BJ (cell line): ENCODE measurements at regions of chr9 and their contacts with region 1.

Region 1: DNA sequence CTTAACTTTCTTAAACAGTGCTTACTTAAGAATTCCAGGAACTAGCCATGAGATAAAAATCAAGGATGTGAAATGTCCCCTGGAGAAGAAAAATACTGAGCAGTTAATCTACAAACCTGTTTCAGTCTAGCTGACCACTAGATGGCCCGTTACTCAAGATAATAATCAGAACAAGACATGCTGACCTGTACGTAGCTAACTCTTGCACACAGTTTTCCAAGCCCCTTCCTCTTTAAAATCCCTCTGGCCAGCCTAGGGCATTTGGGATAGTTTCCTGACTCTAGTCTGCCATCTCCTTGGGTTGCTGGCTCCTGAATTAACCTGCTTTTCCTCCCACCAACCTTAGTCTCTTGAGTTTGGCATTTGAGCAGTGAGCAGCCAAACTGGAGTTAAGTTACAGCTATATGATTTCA is 59.2 kb upstream of the TRAF1 start:
- DNase-seq: no peak
- H3K4me3 ChIP-seq: no peak overlapping the region
- H3K27me3 ChIP-seq: no peaks in the 10 kb centered on the region
- CTCF ChIP-seq: peak; percentile 72

Region 2: GRCh38 chr9:120490888-120491595 is 494.8 kb before region 1 on chr9:
- CTCF ChIA-PET with region 1: no interaction called
- POLR2A ChIA-PET with region 1: no interaction called
- DNase-seq: no peak
- H3K4me3 ChIP-seq: no peak overlapping the region
- H3K27me3 ChIP-seq: no peaks in the 10 kb centered on the region
- CTCF ChIP-seq: no peak

Region 3: GRCh38 chr9:120755827-120756434 is 229.9 kb before region 1 on chr9:
- CTCF ChIA-PET with region 1: interaction called, 13 read pairs
- POLR2A ChIA-PET with region 1: no interaction called
- DNase-seq: no peak
- H3K4me3 ChIP-seq: no peak overlapping the region
- H3K27me3 ChIP-seq: no peaks in the 10 kb centered on the region
- CTCF ChIP-seq: peak; percentile 82

Region 4: DNA sequence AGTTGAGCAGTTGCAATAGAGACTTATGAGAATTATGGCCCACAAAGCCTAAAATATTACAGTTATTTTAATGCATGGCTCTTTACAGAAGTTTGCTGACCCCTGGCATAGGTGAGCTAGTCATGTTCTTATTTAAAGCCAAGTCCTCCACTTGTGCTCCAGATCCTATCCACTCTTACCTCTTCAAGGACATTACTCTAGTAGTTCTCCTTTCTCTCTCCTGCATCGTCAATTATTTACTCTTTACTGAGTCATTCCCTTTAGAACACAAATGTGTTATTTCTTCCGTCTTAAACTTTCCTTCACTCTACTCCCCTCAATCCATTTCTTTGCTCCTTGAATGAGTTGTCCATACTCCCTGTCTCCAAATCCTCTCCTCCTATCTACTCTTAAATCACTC is 38.6 kb before region 1 on chr9:
- CTCF ChIA-PET with region 1: no interaction called
- POLR2A ChIA-PET with region 1: no interaction called
- DNase-seq: no peak
- H3K4me3 ChIP-seq: no peak overlapping the region
- H3K27me3 ChIP-seq: no peaks in the 10 kb centered on the region
- CTCF ChIP-seq: no peak

Region 5: GRCh38 chr9:120965344-120966012 is 20.3 kb before region 1 on chr9:
- CTCF ChIA-PET with region 1: interaction called, 12 read pairs
- POLR2A ChIA-PET with region 1: no interaction called
- DNase-seq: no peak
- H3K4me3 ChIP-seq: no peak overlapping the region
- H3K27me3 ChIP-seq: no peaks in the 10 kb centered on the region
- CTCF ChIP-seq: no peak

Region 6: DNA sequence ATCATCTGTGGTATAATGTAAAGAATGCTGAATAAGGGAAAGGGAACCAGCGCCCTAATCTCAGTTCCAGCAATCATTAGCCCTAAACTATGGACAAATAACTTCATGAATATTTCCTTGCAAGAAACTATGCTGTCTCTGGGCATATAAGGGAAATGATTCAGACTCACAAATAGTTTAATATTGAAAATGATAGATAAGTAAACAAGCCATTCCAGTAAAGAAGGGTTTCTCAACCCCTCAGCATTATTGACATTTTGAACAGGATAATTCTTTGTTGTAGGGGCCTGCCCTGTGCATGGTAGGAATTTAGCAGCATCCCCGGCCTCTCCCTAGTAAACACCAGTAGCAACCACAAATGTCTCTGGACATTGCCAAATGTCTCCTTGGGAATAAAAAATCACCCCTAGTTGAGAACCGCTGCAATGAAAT is 40.5 kb after region 1 on chr9:
- CTCF ChIA-PET with region 1: no interaction called
- POLR2A ChIA-PET with region 1: no interaction called
- DNase-seq: no peak
- H3K4me3 ChIP-seq: no peak overlapping the region
- H3K27me3 ChIP-seq: no peaks in the 10 kb centered on the region
- CTCF ChIP-seq: no peak

Region 7: GRCh38 chr9:121059998-121060636 is 74.3 kb after region 1 on chr9:
- CTCF ChIA-PET with region 1: interaction called, 75 read pairs
- POLR2A ChIA-PET with region 1: no interaction called
- DNase-seq: no peak
- H3K4me3 ChIP-seq: no peak overlapping the region
- H3K27me3 ChIP-seq: no peaks in the 10 kb centered on the region
- CTCF ChIP-seq: peak; percentile 77

Region 8: GRCh38 chr9:121071756-121072421 is 86.1 kb after region 1 on chr9:
- CTCF ChIA-PET with region 1: interaction called, 11 read pairs
- POLR2A ChIA-PET with region 1: no interaction called
- DNase-seq: no peak
- H3K4me3 ChIP-seq: peak overlapping the region; percentile 35
- H3K27me3 ChIP-seq: no peaks in the 10 kb centered on the region
- CTCF ChIP-seq: peak; percentile 36

Region 9: GRCh38 chr9:121399883-121400607 is 414.2 kb after region 1 on chr9:
- CTCF ChIA-PET with region 1: interaction called, 13 read pairs
- POLR2A ChIA-PET with region 1: no interaction called
- DNase-seq: peak; percentile 51
- H3K4me3 ChIP-seq: no peak overlapping the region
- H3K27me3 ChIP-seq: no peaks in the 10 kb centered on the region
- CTCF ChIP-seq: peak; percentile 48